Heart right ventricle (tissue), 16 donors: ENCODE measurements at regions of chr12 and their contacts with region 1.

Region 1: DNA sequence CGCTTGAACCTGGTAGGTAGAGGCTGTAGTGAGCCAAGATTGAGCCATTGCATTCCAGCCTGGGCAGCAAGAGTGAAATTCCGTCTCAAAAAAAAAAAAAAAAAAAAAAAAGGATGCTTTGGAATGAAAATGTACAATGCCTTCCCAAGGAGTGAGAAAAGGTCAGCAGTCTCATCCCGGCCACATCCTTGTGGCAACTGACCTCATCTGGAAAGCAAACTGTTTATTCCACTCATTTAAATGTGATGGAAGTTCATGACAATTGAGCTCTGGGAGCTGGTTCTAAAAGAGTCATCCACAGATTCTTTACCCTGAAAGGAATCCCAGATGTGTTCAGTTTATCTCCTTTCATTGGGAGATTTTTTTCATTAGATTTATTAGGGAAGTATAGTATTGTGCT is 19.4 kb upstream of the LIMA1 start:
- DNase-seq: no peak
- ATAC-seq: no peak
- H3K4me3 ChIP-seq: no peak overlapping the region
- H3K27ac ChIP-seq: no peak overlapping the region
- H3K4me1 ChIP-seq: peaks cover 0 to 19% (median under 1%) of the 10 kb centered on the region in 9 donors
- H3K27me3 ChIP-seq: no peaks in the 10 kb centered on the region
- CTCF ChIP-seq: no peak

Region 2: DNA sequence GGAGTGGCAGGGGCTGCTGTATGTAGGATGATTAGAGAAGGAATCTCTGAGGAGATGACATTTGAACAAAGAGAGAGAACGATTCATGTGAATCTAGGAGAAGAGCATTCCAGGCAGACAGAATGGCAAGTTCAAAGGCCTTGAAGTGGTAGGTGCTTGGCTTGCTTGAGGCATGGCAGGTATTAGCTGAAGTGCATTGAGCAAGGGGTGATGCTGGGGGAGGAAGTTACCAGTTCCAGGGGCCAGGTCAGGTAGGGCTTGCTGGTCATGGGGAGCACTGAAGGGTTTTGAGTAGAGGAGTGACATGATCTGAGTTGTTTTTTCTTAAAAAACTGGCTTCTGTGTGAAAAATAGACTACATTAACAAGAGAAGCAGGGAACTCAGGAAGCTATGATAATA is 863.6 kb before region 1 on chr12:
- intact Hi-C with region 1: loop called in 1 of 10 experiments (anchors 5 kb)
- DNase-seq: no peak
- ATAC-seq: no peak
- H3K4me3 ChIP-seq: no peak overlapping the region
- H3K27ac ChIP-seq: no peak overlapping the region
- H3K4me1 ChIP-seq: peaks cover 0 to 7% (median 0%) of the 10 kb centered on the region in 9 donors
- H3K27me3 ChIP-seq: no peaks in the 10 kb centered on the region
- CTCF ChIP-seq: no peak

Region 3: DNA sequence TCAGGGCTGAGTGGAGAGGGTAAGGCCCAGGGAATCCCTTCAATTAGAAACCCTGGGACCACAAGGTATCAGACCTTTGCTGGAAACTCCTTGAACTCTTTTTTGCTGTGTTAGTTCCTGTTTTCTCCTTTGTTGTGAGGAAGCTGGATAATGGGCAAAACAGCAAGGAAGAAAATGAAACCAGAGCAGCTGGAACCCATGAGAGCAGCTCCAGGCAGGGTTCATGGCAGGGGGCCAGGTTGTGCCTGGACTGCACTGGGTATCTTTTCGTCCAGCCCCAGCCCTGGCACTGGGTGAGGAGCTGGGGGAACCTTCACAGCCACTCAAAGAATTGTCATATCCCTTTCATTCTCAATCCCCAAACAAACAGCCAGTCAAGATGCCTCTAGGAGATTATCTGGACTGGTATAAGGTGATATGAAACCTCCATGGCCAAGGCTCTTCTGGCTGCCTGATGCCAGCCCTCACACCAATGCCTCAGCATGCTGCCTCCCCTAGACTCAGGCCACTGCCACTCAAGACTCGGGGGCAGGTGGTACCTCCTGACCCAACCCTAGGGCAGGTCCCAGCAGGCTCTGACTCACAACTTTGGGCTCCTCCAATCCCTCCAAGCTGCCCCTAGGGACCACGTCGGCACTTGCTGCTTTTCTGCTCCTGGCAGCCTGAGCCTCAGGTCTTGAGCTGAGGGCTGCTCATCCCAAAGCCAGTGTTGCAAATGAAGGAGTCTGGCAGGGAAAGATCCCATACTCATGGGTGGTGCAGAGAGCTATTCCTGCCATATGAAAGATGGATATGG is 713.8 kb before region 1 on chr12:
- intact Hi-C with region 1: no loop called
- DNase-seq: peak in 1 of 2 donors; percentile 50
- ATAC-seq: peak in 3 of 8 donors; percentile 27 to 55 (median 39)
- H3K4me3 ChIP-seq: no peak overlapping the region
- H3K27ac ChIP-seq: peak overlapping the region in 2 of 10 donors; percentile 18 to 53
- H3K4me1 ChIP-seq: peaks cover 0 to 35% (median 11%) of the 10 kb centered on the region in 9 donors
- H3K27me3 ChIP-seq: no peaks in the 10 kb centered on the region
- CTCF ChIP-seq: no peak

Region 4: DNA sequence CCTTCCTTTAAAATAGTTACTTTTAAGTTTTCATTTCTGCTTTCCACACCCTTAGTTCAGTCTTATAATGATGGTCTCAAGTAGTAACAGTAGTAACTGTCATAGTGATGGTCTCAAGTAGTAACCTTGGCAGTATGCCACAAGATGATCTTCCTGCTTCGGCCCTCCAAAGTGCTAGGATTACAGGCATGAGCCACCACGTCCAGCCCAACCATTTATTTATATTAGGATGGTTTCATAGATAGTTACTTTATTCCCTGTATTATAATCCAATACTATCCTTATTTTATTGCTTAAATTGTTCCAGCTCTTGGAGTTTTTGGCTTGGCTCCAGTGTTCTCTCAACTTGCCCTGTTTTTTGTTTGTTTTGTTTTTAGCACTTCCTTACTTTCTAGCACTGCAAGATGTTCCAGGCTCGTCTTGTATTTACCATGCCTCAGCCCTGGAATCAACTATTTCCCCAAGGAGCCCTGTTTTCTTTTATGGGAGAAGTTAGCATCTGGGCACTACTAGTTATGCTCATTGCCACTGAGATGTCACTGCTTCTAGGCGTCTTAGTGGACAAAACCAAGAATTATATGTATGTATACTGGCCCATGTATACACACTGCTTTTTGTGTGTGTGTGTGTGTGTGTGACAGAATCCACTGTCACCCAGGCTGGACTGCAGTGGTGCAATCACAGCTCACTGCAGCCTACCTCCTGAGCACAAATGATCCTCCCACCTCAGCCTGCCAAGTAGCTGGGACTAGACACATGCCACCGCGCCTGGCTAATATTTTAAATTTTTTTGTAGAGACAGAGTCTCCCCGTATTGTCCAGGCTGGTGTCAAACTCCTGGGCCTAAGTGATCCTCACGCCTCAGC is 44.8 kb before region 1 on chr12:
- intact Hi-C with region 1: no loop called
- DNase-seq: peak; percentile 25 to 36
- ATAC-seq: peak in 7 of 8 donors; percentile 50 to 82 (median 75)
- H3K4me3 ChIP-seq: no peak overlapping the region
- H3K27ac ChIP-seq: peak overlapping the region; percentile 28 to 73 (median 50)
- H3K4me1 ChIP-seq: peaks cover 10 to 51% (median 41%) of the 10 kb centered on the region in 9 donors
- H3K27me3 ChIP-seq: no peaks in the 10 kb centered on the region
- CTCF ChIP-seq: no peak